IMR-90 (cell line): ENCODE measurements at regions of chr16 and their contacts with region 1.

Region 1: DNA sequence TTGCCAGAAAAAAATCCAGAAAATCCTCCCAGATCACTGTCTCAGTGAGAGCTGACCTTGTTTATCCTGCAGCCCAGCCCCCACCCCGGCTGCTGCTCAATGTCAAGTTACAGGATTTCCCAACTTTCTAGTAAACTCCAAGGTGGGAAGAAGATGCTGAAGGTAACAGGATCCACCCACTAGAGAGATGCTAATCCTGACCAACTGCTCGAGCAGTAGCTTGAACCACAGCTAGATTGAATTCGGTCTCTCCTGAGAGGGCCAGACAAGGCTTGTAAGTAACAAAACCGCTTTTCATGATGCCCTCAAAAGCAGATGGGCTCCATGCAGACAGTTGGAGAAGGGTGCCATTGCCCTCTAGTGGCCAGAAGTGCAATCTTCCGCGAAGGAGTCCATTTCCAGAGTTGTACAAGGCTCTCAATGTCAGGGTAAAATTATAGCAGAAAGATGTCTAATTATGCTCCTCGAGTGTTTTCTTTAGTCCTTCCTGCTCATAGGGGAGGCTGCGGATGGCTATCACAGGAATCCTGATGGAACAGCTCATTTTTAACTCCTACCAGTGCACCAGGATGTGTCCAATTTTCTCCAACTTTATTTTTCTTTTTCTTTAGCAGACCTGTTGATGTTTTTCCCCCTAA is 3.9 kb downstream of the CDH11 start:
- DNase-seq: peak; percentile 90
- ATAC-seq: peak; percentile 7
- H3K4me3 ChIP-seq: 0 out of 2 replicates have a peak overlapping the region, but pooled peaks have one; percentile 8
- H3K27ac ChIP-seq: peak overlapping the region; percentile 69
- H3K4me1 ChIP-seq: peaks cover 4% of the 10 kb centered on the region
- H3K27me3 ChIP-seq: no peaks in the 10 kb centered on the region
- CTCF ChIP-seq: peak; percentile 95
- POLR2A ChIP-seq: peak; percentile 48
- RAD21 ChIP-seq: peak; percentile 93

Region 2: GRCh38 chr16:63461248-63461841 is 1656.6 kb before region 1 on chr16:
- CTCF ChIA-PET with region 1: no interaction called
- POLR2A ChIA-PET with region 1: no interaction called
- dilution Hi-C with region 1: no loop called
- in situ Hi-C with region 1: no loop called
- intact Hi-C with region 1: loop called (anchors 2 kb)
- DNase-seq: peak; percentile 44
- ATAC-seq: no peak
- H3K4me3 ChIP-seq: no peak overlapping the region
- H3K27ac ChIP-seq: no peak overlapping the region
- H3K4me1 ChIP-seq: no peaks in the 10 kb centered on the region
- H3K27me3 ChIP-seq: no peaks in the 10 kb centered on the region
- CTCF ChIP-seq: peak; percentile 48
- POLR2A ChIP-seq: no peak
- RAD21 ChIP-seq: peak; percentile 67

Region 3: DNA sequence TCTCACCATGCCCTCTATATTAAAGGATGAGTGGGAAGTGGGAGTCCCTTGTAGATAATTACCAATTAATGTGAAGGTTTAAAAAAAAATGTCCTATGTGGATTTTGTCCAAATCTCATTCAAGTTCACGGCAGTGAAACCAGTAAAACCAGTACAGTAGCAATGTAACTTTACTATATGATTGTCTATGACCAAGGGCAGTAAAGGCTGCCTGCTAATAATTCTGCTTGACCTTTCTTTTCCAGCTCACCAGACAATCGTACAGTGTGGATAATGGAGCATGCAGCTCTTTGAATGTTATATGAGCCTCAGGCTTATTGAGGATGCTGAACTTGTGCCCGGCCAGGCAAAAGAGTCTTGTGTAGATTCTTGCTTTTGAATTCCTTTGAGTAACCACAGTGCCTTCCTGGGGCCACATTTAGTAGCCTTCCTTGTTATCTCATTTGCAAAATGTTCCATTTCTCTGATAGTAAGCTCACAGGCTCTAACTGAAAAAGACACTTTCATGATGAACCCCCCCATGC is 127.9 kb before region 1 on chr16:
- CTCF ChIA-PET with region 1: no interaction called
- POLR2A ChIA-PET with region 1: no interaction called
- dilution Hi-C with region 1: no loop called
- in situ Hi-C with region 1: no loop called
- intact Hi-C with region 1: loop called (anchors 5 kb)
- DNase-seq: no peak
- ATAC-seq: no peak
- H3K4me3 ChIP-seq: no peak overlapping the region
- H3K27ac ChIP-seq: no peak overlapping the region
- H3K4me1 ChIP-seq: no peaks in the 10 kb centered on the region; the same call in 1 of the 2 replicates
- H3K27me3 ChIP-seq: no peaks in the 10 kb centered on the region
- CTCF ChIP-seq: no peak
- POLR2A ChIP-seq: no peak
- RAD21 ChIP-seq: no peak

Region 4: GRCh38 chr16:65572156-65572555 is 454.2 kb after region 1 on chr16:
- CTCF ChIA-PET with region 1: no interaction called
- POLR2A ChIA-PET with region 1: no interaction called
- dilution Hi-C with region 1: no loop called
- in situ Hi-C with region 1: no loop called
- intact Hi-C with region 1: loop called (anchors 5 kb)
- DNase-seq: peak; percentile 88
- ATAC-seq: peak; percentile 98
- H3K4me3 ChIP-seq: no peak overlapping the region
- H3K27ac ChIP-seq: peak overlapping the region; percentile 80; the same call in 1 of the 2 replicates
- H3K4me1 ChIP-seq: peaks cover 3% of the 10 kb centered on the region; the same call in 1 of the 2 replicates
- H3K27me3 ChIP-seq: no peaks in the 10 kb centered on the region
- CTCF ChIP-seq: 0 out of 2 replicates have a peak, but pooled peaks have one; percentile 20
- POLR2A ChIP-seq: no peak
- RAD21 ChIP-seq: peak; percentile 37; the same call in 1 of the 2 replicates

Region 5: GRCh38 chr16:66026211-66026610 is 908.3 kb after region 1 on chr16:
- CTCF ChIA-PET with region 1: no interaction called
- POLR2A ChIA-PET with region 1: no interaction called
- dilution Hi-C with region 1: no loop called
- in situ Hi-C with region 1: no loop called
- intact Hi-C with region 1: loop called (anchors 2 kb)
- DNase-seq: no peak
- ATAC-seq: no peak
- H3K4me3 ChIP-seq: no peak overlapping the region
- H3K27ac ChIP-seq: no peak overlapping the region
- H3K4me1 ChIP-seq: peaks cover 9% of the 10 kb centered on the region; the same call in 1 of the 2 replicates
- H3K27me3 ChIP-seq: no peaks in the 10 kb centered on the region
- CTCF ChIP-seq: peak; percentile 39
- POLR2A ChIP-seq: no peak
- RAD21 ChIP-seq: peak; percentile 53

Region 6: DNA sequence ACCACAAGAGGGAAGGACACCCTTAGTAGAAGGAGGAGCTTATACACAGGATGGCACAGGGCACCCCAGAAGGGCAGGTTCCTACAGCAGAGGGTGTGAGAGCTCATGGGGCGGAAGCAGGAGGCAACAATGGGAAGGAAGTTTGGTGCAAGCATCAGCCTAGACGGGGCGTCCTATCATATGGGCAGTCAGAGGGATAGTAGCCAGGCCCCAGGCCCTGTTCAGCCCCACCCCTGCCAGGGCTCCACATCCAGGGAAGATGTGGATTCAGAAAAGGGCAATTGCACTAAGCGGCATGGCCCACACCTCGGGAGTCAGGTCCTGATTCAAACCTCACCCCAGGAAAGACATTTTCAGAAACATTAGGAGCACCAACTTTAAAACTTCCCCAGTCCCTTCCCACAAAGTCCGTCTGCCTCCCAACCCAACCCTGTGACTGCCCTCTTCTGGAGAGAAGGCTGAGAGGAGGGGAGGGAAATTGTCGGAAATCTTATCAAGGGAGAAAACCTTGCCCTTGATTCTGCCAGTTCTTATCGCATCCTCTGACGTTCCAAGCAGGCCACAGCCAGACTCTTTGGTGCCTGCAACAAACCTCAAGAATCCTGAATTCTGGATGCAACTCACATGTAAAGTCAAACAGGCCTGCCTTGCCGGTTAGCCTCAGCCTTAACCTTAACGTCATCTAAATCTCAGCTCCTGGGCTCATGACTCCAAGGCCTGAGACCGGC is 1049.8 kb after region 1 on chr16:
- CTCF ChIA-PET with region 1: no interaction called
- POLR2A ChIA-PET with region 1: no interaction called
- dilution Hi-C with region 1: no loop called
- in situ Hi-C with region 1: no loop called
- intact Hi-C with region 1: loop called (anchors 5 kb)
- DNase-seq: peak; percentile 46
- ATAC-seq: peak; percentile 55
- H3K4me3 ChIP-seq: no peak overlapping the region
- H3K27ac ChIP-seq: no peak overlapping the region
- H3K4me1 ChIP-seq: peaks cover 6% of the 10 kb centered on the region; the same call in 1 of the 2 replicates
- H3K27me3 ChIP-seq: peaks cover 5% of the 10 kb centered on the region
- CTCF ChIP-seq: peak; percentile 53
- POLR2A ChIP-seq: no peak
- RAD21 ChIP-seq: peak; percentile 66